Kidney (tissue), 22 donors: ENCODE measurements at regions of chr2 and their contacts with region 1.

Region 1: DNA sequence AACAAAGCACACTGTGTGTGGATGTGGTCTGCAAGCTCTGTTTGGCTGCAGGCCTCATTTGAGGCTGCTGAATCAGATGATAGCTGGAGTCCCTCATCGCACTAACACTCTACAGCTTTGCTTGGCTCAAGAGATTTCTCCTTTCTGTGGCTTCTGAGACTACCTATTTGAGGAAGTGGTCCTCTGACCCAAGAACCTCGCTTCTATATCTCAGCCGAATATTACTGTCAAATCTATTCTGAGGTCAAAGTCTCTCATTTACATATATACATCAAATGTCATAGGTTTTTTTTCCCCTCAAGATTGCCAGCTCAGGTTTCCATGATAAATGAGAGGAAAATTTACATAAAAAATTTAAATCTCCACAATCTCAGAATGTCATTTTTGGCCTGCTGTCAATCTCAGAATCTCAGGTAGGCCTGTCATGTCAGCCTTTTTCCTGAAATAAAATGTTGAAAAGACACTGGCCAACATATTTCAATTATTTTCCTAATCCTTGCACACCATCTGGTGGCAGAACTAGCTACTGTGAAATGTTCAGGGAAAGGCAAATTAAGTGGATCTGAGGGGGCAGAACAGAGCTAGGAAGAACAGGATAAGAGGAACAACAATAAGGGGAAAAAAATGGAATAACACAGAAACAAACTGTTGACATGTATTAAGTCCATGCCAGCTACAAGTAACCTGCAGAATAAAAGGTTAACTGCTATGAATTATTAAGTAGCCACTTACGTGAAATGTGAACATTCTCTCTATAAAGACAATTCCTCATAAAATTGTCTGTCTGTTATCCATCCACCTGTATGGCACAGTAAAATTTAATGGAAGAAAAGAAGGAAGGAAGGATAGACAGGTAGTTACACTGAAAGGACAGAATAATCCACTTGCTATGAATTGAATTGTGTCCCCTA is 39.3 kb downstream of the AP1S3 start:
- DNase-seq: peak in 2 of 5 donors; percentile 77 to 82
- H3K4me3 ChIP-seq: no peak overlapping the region
- H3K27ac ChIP-seq: no peak overlapping the region
- H3K4me1 ChIP-seq: no peaks in the 10 kb centered on the region
- H3K27me3 ChIP-seq: no peaks in the 10 kb centered on the region
- CTCF ChIP-seq: peak; percentile 70

Region 2: DNA sequence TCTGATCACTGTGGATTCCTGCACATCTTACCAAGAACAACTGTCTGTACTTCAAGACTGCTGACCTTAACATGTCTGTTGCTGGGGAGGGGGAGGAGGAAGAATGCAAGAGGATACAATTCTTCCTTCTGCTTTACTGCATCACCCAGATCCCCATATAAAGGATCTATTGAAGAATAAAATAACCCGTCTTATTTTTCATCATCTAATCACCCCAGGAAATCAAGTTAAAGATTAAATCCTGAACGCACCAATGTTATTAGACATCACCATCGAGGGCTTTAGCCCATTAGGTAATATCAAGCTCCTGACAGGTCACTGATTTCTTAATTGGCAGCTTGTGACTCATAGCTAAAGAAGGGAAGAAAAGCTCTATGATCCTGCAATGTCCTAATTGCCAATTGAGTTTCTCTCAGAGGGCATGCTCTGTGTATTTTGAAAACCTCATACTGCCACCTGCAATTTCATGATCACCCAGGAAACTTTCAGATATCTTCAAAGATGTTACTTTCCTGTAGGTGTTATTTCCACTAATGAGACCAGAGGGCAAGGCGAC is 821.5 kb before region 1 on chr2:
- intact Hi-C with region 1: loop called (anchors 10 kb)
- DNase-seq: no peak
- H3K4me3 ChIP-seq: no peak overlapping the region
- H3K27ac ChIP-seq: no peak overlapping the region
- H3K4me1 ChIP-seq: peaks cover 0 to 1% (median 0%) of the 10 kb centered on the region in 3 donors
- H3K27me3 ChIP-seq: no peaks in the 10 kb centered on the region
- CTCF ChIP-seq: no peak

Region 3: GRCh38 chr2:224807153-224807964 is 1009.3 kb after region 1 on chr2:
- intact Hi-C with region 1: no loop called
- DNase-seq: no peak
- H3K4me3 ChIP-seq: no peak overlapping the region
- H3K27ac ChIP-seq: no peak overlapping the region
- H3K4me1 ChIP-seq: no peaks in the 10 kb centered on the region
- H3K27me3 ChIP-seq: no peaks in the 10 kb centered on the region
- CTCF ChIP-seq: no peak